Activated CD4-positive, alpha-beta T cell treated with anti-CD3 and anti-CD28 coated beads, Interleukin-2, amount 10 ng/mL, durations not matched to agents 24 days and 14 days (primary cell): ENCODE measurements at regions of chr17 and their contacts with region 1.

Region 1: GRCh38 chr17:80791758-80792284 is 199.8 kb upstream of the CHMP6 start:
- DNase-seq: peak; percentile 85
- H3K4me3 Mint-ChIP-seq: peak overlapping the region; percentile 79
- H3K27ac Mint-ChIP-seq: peak overlapping the region; percentile 97
- H3K4me1 Mint-ChIP-seq: peaks cover 77% of the 10 kb centered on the region
- H3K27me3 Mint-ChIP-seq: no peaks in the 10 kb centered on the region

Region 2: GRCh38 chr17:80761110-80761871 is 30.5 kb before region 1 on chr17:
- intact Hi-C with region 1: loop called (anchors 1 kb)
- DNase-seq: peak; percentile 91
- H3K4me3 Mint-ChIP-seq: peak overlapping the region; percentile 76
- H3K27ac Mint-ChIP-seq: peak overlapping the region; percentile 99
- H3K4me1 Mint-ChIP-seq: peaks cover 75% of the 10 kb centered on the region
- H3K27me3 Mint-ChIP-seq: no peaks in the 10 kb centered on the region

Region 3: DNA sequence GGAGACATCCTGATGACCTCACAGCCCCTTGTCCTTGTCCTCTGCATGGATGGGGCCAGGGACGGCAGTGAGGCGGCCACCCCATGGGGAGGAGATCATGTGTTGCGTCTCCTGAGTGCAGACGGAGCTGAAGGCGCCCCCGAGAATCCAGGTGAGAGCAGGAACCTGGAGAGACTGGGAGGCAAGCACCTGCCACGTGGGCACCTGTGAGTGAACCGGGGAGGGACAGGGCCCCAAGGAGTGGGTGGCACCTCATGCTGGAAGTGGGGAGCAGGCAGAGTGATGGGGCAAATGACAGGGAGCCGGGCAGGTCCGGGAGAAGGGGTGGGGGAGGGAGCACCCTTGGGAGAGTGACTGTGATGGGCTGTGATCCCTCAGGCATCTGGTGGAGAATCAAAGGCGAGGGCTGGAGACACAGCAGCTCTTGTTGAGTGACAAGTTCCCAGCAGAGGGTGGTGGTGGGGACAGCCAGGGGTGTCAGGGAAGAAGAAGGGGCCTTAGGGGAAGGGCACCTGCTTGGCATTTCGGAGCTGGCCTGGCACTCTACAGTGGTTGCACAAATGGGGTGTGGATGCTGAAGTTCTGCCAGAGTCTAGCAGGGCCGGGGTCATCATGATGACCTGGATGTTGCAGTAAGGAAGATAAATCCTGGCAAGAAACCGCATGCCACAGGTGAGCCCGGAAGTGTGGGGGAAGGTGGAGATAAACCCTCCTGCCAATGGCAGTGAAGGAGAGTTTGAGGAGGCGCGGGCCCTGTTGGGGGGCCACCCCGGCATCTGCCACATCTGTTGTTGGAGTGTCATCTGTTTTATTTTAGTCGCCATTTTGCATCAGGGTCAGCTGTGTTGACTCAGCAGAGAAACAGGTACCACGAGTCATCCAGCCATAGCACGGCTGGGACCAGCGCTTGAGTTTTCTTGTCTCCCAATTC is 25.8 kb after region 1 on chr17:
- intact Hi-C with region 1: loop called (anchors 2 kb)
- DNase-seq: no peak
- H3K4me3 Mint-ChIP-seq: no peak overlapping the region
- H3K27ac Mint-ChIP-seq: peak overlapping the region; percentile 60
- H3K4me1 Mint-ChIP-seq: peaks cover 77% of the 10 kb centered on the region
- H3K27me3 Mint-ChIP-seq: no peaks in the 10 kb centered on the region

Region 4: GRCh38 chr17:80855948-80856862 is 64.4 kb after region 1 on chr17:
- intact Hi-C with region 1: loop called (anchors 5 kb)
- DNase-seq: peak; percentile 95
- H3K4me3 Mint-ChIP-seq: peak overlapping the region; percentile 62
- H3K27ac Mint-ChIP-seq: peak overlapping the region; percentile 91
- H3K4me1 Mint-ChIP-seq: peaks cover 73% of the 10 kb centered on the region
- H3K27me3 Mint-ChIP-seq: no peaks in the 10 kb centered on the region

Region 5: GRCh38 chr17:80892019-80892855 is 100.4 kb after region 1 on chr17:
- intact Hi-C with region 1: loop called (anchors 1 kb)
- DNase-seq: peak; percentile 95
- H3K4me3 Mint-ChIP-seq: peak overlapping the region; percentile 82
- H3K27ac Mint-ChIP-seq: peak overlapping the region; percentile 93
- H3K4me1 Mint-ChIP-seq: peaks cover 69% of the 10 kb centered on the region
- H3K27me3 Mint-ChIP-seq: no peaks in the 10 kb centered on the region